ENCODE measurements at regions of chr4 and their contacts with region 1.

Region 1: DNA sequence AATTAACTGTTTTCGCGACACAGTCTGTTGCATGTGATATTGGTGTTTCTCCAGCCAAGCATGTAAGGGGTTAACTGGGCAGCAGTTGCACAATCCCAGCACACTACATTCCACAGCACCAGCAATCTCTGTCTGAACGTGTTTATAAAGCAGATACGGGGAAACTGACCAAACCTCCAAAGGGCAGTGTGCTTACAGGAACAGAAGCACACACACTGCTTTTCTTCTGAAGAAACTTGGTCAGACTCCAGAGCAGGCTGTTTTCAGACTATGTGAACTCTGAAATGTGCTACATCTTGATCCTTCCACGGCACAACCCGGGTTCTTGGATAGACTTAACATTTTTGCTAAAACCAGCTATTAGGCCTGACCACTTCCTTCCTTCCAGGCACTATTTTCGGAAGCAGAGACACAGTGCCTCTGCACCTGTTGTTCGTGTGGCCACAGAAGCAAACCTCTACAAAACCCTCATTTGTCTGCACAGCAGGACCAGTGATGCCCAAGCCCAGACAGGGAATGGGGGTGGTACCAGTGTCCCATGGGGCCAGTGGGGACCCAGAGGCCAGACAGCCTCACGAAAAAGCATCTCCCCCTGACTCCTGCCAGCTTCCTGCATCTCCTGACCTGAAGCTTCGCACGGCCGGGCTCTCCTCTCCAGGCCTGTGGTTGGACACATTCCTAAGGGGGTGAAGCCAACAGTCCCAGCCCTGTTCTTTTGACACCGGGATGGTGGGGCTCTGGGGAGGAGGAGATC is 90.1 kb downstream of the IRF2 start:
- DNase-seq: peak; percentile 80
- H3K4me3 ChIP-seq: peak overlapping the region in 5 of 8 donors; percentile 1 to 55 (median 7)
- H3K27ac ChIP-seq: peak overlapping the region; percentile 65 to 85 (median 80)
- H3K4me1 ChIP-seq: peaks cover 47 to 84% (median 73%) of the 10 kb centered on the region in 6 donors
- H3K27me3 ChIP-seq: no peaks in the 10 kb centered on the region
- CTCF ChIP-seq: no peak
- POLR2A ChIP-seq: no peak

Region 2: DNA sequence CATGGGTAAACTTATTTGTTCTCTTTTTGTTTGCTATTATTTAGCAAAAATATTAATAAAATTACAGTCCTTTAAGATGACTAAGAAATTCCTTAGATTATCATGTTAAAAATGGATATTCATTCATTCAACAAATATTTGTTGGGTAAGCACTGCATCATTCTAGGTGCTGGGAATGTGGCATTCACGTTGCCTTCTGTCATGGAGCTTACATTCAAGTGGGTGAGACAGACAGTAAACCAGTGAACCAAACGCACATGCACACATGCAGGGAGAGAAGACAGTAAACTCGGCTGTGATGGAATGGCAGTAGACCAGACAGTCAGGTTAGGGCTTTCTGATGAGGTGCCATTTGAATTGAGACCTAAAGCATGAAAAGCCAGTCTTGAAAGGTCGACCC is 387.4 kb before region 1 on chr4:
- intact Hi-C with region 1: no loop called
- DNase-seq: no peak
- H3K4me3 ChIP-seq: no peak overlapping the region
- H3K27ac ChIP-seq: no peak overlapping the region
- H3K4me1 ChIP-seq: peaks cover 0 to 5% (median 0%) of the 10 kb centered on the region in 6 donors
- H3K27me3 ChIP-seq: no peaks in the 10 kb centered on the region
- CTCF ChIP-seq: no peak
- POLR2A ChIP-seq: no peak

Region 3: GRCh38 chr4:184293552-184293951 is 90.7 kb before region 1 on chr4:
- intact Hi-C with region 1: loop called (anchors 10 kb)
- DNase-seq: no peak
- H3K4me3 ChIP-seq: peak overlapping the region in 1 of 8 donors; percentile 22
- H3K27ac ChIP-seq: peak overlapping the region in 5 of 8 donors; percentile 29 to 71 (median 54)
- H3K4me1 ChIP-seq: peaks cover 0 to 21% (median 12%) of the 10 kb centered on the region in 6 donors
- H3K27me3 ChIP-seq: no peaks in the 10 kb centered on the region
- CTCF ChIP-seq: no peak
- POLR2A ChIP-seq: no peak

Measured in spleen (tissue), 13 donors.